ENCODE measurements at regions of chr17 and their contacts with region 1.

Region 1: GRCh38 chr17:59786536-59787319 is 79.3 kb downstream of the VMP1 start:
- DNase-seq: peak; percentile 86
- H3K4me3 Mint-ChIP-seq: peak overlapping the region; percentile 67
- H3K27ac Mint-ChIP-seq: peak overlapping the region; percentile 100
- H3K4me1 Mint-ChIP-seq: peaks cover 72% of the 10 kb centered on the region
- H3K27me3 Mint-ChIP-seq: no peaks in the 10 kb centered on the region

Region 2: GRCh38 chr17:59753522-59754467 is 32.9 kb before region 1 on chr17:
- CTCF ChIA-PET with region 1: interaction called, 37 read pairs
- DNase-seq: peak; percentile 37
- H3K4me3 Mint-ChIP-seq: peak overlapping the region; percentile 65
- H3K27ac Mint-ChIP-seq: peak overlapping the region; percentile 89
- H3K4me1 Mint-ChIP-seq: peaks cover 70% of the 10 kb centered on the region
- H3K27me3 Mint-ChIP-seq: no peaks in the 10 kb centered on the region

Region 3: GRCh38 chr17:59829217-59830006 is 42.7 kb after region 1 on chr17:
- CTCF ChIA-PET with region 1: interaction called, 22 read pairs
- DNase-seq: peak; percentile 50
- H3K4me3 Mint-ChIP-seq: peak overlapping the region; percentile 75
- H3K27ac Mint-ChIP-seq: peak overlapping the region; percentile 98
- H3K4me1 Mint-ChIP-seq: peaks cover 83% of the 10 kb centered on the region
- H3K27me3 Mint-ChIP-seq: no peaks in the 10 kb centered on the region

Region 4: DNA sequence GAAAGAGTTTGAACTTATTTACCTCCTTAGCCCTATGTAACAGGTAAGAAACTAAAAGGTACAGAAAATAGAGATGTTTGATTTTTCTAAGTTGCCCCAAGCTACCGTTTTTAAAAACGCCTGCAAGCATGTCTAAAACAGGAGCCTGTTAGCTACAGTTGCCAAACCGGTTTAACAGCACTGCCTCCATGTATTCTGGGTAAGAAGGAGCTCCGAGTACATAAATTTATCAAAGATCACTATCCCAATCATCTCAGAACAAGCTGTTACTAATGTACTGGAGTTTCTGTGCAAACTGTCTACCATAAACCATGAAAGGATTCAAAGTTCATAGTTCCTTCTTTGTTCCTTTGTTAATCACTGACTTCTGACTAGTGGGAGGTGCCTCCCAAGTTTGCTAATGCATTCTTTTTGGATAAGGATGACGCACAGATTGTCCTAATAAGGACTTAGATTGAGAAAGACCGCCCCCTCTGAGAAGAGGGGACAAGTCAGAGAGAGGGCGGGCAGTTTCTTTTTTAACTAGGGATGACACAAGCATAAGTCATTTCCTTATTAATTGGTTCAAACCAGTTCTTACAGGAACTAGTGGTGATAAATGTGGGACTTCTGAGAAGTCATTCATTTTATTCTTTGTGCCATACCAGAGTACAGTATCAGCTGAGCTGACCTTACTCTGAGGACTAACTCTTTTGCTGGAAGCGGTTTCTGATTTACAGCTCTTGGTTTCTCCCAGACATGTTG is 50.8 kb after region 1 on chr17:
- CTCF ChIA-PET with region 1: interaction called, 22 read pairs
- DNase-seq: peak; percentile 79
- H3K4me3 Mint-ChIP-seq: peak overlapping the region; percentile 97
- H3K27ac Mint-ChIP-seq: peak overlapping the region; percentile 99
- H3K4me1 Mint-ChIP-seq: peaks cover 42% of the 10 kb centered on the region
- H3K27me3 Mint-ChIP-seq: no peaks in the 10 kb centered on the region

Region 5: DNA sequence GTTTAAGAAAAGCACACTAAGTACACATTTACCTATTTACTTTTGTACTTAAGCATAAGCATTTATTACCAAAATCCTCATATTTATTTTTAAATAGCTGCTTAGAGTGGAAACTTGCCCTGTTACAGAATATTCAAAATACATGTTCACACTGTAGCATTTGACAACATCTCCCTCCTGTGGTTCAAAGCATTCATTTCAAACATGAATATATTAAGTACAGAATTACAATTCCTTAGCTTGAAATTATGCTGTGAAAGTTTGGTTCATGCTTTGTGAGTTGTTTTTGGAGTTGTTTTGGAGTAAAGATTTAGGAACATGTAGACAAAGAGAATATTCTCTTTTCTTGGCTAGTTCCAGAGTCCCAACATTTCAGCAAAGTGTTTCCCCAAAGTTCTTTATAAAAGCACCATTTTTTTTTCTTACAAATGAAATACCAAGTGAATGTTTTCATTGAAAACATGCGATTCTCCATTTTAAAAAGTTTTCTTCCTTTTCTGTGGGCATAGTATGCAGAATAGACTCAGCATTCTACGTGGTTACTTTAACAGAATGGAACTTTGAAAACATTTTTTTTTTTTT is 72.8 kb after region 1 on chr17:
- CTCF ChIA-PET with region 1: interaction called, 14 read pairs
- DNase-seq: no peak
- H3K4me3 Mint-ChIP-seq: no peak overlapping the region
- H3K27ac Mint-ChIP-seq: no peak overlapping the region
- H3K4me1 Mint-ChIP-seq: peaks cover 23% of the 10 kb centered on the region
- H3K27me3 Mint-ChIP-seq: no peaks in the 10 kb centered on the region